Posterior vena cava (tissue), 2 donors: ENCODE measurements at regions of chr20 and their contacts with region 1.

Region 1: GRCh38 chr20:48329635-48330277 is 498.0 kb downstream of the PREX1 start:
- DNase-seq: no peak

Region 2: DNA sequence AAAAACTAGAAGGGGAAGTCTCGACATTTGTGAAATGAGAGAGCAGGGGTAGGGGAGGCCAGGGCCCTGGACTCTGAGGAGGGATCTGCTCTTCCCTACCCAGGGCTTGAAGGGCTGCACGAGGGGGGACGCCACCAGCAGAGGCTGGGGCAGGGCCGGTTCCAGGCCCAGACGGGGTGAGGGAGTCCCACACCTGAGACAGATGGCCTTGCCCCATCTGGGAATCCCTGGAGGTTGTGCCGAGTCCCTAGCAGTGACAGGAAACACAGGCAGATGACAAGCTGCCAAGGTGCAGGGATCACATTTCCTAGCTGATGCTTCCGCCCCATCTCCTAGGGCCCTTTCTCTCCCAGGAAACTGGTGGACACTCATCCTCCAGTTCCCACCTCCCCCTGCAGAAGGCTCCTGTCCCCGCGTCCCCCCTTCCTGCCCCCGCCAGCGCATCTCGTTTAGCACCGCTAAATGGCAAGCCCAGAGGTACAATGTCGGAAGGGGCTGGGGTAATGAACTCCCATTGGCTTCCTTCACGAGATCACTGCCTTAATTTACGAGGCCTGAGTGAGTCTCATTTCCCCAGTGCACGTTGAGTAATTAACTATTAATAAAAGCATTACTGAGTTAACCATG is 1986.3 kb before region 1 on chr20:
- intact Hi-C with region 1: loop called in 1 of 2 experiments (anchors 5 kb)
- DNase-seq: no peak

Region 3: DNA sequence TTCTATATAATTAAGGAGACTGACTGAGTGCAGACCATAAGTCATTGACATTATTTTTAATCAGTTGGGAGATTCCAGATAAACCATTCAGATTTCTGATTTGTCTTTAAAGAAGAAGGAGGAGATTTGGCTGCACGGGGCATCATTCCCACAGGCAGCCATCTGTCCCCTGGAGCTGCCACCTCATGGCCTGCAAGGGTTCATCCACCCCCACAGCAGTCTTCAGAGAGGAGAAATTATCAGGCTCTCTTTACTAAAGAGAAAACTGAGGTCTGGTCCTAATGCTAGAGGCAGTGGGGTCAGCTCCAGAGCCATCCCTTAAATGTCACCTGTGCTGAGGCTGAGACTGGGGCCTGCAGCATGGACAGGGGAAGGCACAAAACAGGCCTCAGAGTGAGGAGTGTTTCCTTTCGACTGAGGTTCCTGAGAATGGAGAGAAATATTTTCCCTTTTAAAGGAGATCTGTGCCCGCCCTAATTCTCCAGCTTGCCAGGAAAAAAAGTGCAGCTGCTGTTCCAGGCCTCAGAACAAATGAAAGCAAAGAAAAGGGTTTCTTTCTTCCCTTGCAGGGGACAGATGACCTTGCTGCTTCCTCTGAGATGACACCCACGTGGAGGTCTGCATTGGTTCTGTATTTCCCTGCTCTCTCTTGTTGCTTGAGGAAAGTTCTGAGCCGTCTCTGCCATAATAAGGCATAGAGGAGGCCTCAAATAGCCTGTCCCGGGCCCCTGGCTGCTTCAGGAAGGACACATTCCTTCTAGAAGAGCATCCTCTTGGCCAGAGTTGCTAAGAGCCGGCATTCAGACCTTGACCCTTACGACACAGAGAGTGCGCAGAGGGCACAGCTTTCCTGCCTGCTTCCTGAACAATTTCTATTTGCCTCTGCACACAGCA is 42.9 kb before region 1 on chr20:
- intact Hi-C with region 1: no loop called
- DNase-seq: no peak